Heart right ventricle (tissue), 16 donors: ENCODE measurements at regions of chrX and their contacts with region 1.

Region 1: GRCh38 chrX:49840679-49841078 is 11.6 kb downstream of the PAGE4 start:
- DNase-seq: peak; percentile 38 to 41
- ATAC-seq: peak; percentile 55 to 90 (median 80)
- H3K4me3 ChIP-seq: no peak overlapping the region
- H3K27ac ChIP-seq: no peak overlapping the region
- H3K4me1 ChIP-seq: no peaks in the 10 kb centered on the region
- H3K27me3 ChIP-seq: peaks cover 0 to 31% (median 0%) of the 10 kb centered on the region in 7 donors
- CTCF ChIP-seq: peak in 7 of 9 donors; percentile 21 to 43 (median 34)

Region 2: DNA sequence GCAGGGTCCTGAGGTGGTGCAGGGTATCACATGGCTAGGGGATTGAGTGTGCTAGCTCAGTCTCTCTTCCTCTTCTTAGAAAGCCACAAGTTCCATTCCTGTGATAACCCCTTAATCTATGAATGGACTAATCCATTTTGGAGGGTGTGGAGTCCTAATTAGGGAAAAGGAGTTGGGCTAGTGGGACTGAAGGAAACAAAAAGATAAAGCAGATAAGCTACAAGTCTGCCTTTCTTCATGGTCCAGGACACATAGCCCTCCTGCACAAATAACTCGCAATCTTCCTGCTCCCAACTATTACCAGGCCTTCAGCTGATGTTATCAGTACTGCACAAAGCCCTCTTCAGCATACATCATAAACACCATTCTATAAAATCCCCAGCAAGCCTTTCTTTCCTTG is 1959.8 kb before region 1 on chrX:
- intact Hi-C with region 1: loop called in 1 of 10 experiments (anchors 5 kb)
- DNase-seq: no peak
- ATAC-seq: no peak
- H3K4me3 ChIP-seq: no peak overlapping the region
- H3K27ac ChIP-seq: no peak overlapping the region
- H3K4me1 ChIP-seq: no peaks in the 10 kb centered on the region
- H3K27me3 ChIP-seq: no peaks in the 10 kb centered on the region
- CTCF ChIP-seq: no peak

Region 3: GRCh38 chrX:49878834-49879659 is 38.4 kb after region 1 on chrX and contains the start of gene USP27X:
- intact Hi-C with region 1: loop called in 1 of 10 experiments (anchors 2 kb)
- DNase-seq: peak; percentile 71 to 78
- ATAC-seq: peak; percentile 91 to 96 (median 94)
- H3K4me3 ChIP-seq: peak within 1 kb of the TSS; percentile 41 to 75 (median 64)
- H3K27ac ChIP-seq: peak within 1 kb of the TSS; percentile 43 to 90 (median 82)
- H3K4me1 ChIP-seq: peaks cover 0 to 36% (median 5%) of the 10 kb centered on the region in 9 donors
- H3K27me3 ChIP-seq: peaks cover 0 to 6% (median 0%) of the 10 kb centered on the region in 7 donors
- CTCF ChIP-seq: peak; percentile 13 to 70 (median 48)
- total RNA-seq, gene USP27X: 1.8 to 2.9 (median 2.0) TPM